AG04449 (cell line): ENCODE measurements at regions of chr3 and their contacts with region 1.

Region 1: DNA sequence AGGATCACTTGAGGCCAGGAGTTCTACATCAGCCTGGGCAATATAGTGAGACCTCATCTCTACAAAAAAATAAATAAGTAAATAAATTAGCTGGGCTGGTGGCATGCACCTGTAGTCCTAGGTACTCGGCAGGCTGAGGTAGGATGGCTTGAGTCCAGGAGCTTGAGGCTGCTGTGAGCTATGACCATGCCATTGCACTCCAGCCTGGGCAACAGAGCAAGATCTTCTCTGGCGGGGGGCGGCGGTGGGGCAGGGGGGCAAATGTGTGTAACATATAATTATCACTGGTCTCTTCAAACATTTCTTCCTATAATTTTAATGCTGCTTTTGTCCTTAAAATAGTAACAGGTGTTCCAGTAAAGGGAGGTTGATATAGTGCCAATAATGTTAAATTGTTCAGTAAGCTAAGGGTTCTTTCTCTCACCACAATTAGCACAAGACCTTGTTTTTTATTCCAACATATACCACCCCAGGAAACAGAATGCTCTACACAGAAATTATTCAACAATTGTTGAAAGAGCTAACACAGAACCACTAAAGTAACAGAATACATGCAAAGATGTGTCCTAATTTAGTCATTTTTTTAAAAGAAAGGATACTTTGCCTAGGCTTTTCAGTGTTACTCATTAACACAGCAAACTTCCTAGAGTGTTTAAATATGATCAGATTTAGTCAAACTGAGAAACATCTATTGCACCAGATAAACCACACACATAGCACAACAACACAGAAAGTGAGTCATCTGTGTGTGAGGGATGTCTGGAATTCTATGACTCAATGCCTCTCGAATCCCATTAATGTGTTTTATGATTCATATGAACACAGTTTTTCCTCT is 29.1 kb downstream of the ANKRD28 start:
- DNase-seq: peak; percentile 94
- H3K4me3 ChIP-seq: no peak overlapping the region
- CTCF ChIP-seq: no peak

Region 2: GRCh38 chr3:15758295-15758694 is 10.3 kb before region 1 on chr3:
- CTCF ChIA-PET with region 1: interaction called, 10 read pairs
- POLR2A ChIA-PET with region 1: no interaction called
- DNase-seq: no peak
- H3K4me3 ChIP-seq: no peak overlapping the region
- CTCF ChIP-seq: no peak

Region 3: DNA sequence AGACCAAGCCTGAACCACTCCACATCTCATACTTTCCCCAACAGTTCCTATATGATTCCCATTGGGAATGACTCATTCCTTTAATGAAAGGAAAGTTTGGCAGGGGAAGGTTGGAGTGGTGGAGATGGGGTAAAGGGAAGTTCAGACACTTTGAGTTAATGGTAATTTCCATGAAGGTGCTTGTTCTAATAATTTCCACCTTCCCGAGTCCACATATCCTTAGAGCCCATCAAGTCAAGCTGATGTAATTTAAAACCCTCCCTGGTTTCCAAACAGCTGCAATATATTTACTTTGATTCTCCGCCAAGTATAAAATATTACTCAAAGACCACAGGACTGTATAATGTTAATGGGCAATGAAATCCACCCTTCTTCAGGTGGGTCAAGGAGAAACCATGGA is 310.9 kb after region 1 on chr3:
- CTCF ChIA-PET with region 1: no interaction called
- POLR2A ChIA-PET with region 1: no interaction called
- DNase-seq: no peak
- H3K4me3 ChIP-seq: no peak overlapping the region
- CTCF ChIP-seq: no peak